ENCODE measurements at regions of chr20 and their contacts with region 1.

Region 1: DNA sequence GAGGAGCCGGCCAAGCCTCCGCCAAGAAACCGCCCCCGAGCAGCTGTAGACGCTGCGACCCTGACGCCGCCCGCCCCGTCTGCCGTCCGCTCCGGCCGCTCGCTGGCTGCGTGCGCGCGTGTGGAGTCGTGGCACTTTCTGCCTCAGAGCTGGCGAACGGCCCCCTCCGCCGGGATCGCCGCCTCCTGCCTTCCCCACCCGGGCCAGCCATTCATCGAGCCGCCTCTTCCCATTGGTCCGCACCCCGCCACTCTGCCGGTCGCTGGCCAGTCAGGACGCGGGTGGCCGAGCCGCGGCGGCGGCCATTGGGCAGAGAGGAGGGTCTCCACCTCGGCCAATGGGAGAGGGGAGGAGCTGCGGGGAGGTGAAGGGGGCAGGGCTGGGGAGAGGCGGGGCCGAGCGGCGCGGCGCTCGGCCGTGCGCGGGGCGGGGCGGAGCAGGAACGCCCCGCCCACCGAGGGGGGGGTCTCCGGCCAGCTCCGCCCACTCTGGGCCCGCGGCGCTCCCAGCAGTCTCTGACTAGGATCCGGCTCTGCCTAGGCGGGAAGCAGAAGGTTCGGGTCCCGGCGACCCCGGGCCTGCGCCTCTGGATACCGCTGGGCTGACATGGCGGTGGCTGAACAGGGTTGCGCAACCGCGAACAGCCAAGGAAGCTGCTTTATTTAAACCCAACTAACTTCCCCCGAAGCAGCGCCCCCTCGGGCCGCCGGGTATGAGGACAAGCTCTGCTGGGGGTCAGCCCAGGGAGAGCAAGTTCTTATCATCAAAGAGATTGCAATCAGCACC is at the start of gene RRBP1:
- DNase-seq: peak; percentile 98
- H3K4me3 Mint-ChIP-seq: peak within 1 kb of the TSS; percentile 84
- H3K27ac Mint-ChIP-seq: peak within 1 kb of the TSS; percentile 83
- H3K4me1 Mint-ChIP-seq: peaks cover 34% of the 10 kb centered on the region
- H3K27me3 Mint-ChIP-seq: peaks cover 41% of the 10 kb centered on the region
- total RNA-seq, gene RRBP1: 82.3 to 85.7 TPM

Region 2: GRCh38 chr20:17541996-17542395 is 140.3 kb before region 1 on chr20:
- CTCF ChIA-PET with region 1: interaction called, 15 read pairs
- POLR2A ChIA-PET with region 1: interaction called, 7 read pairs
- DNase-seq: no peak
- H3K4me3 Mint-ChIP-seq: no peak overlapping the region
- H3K27ac Mint-ChIP-seq: no peak overlapping the region
- H3K4me1 Mint-ChIP-seq: peaks cover 21% of the 10 kb centered on the region
- H3K27me3 Mint-ChIP-seq: peaks cover 53% of the 10 kb centered on the region

Region 3: DNA sequence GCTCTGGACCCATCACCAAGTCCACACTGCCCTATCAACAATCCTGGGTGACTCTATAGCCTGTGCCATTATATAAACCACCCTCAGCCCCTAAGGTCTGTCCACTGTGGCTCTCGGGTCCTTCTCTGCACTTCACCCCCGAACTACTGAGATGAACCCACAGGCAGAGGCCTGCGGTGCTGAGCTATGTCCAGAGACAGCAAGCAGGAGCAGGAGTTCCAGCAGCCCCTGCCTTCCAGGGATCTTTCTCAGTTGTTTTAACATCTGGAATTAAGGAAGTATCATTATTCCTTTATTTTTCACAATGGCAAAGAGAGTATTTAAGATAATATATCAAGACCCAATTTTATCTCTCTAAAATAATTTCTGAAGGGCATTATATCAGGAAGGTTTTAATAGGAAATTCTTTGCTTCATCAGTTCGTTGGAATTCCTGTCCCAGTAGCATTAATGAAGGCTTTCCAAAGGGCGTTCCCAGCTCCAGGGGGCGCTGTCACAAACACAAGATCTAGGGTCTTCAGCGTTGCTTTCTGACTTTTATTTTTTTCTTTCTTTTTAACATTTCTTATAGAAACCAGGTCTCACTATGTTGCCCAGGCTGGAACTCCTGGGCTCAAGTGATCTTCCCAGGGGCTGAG is 27.5 kb before region 1 on chr20:
- CTCF ChIA-PET with region 1: interaction called, 10 read pairs
- POLR2A ChIA-PET with region 1: no interaction called
- DNase-seq: no peak
- H3K4me3 Mint-ChIP-seq: no peak overlapping the region
- H3K27ac Mint-ChIP-seq: no peak overlapping the region
- H3K4me1 Mint-ChIP-seq: peaks cover 16% of the 10 kb centered on the region
- H3K27me3 Mint-ChIP-seq: no peaks in the 10 kb centered on the region

Region 4: DNA sequence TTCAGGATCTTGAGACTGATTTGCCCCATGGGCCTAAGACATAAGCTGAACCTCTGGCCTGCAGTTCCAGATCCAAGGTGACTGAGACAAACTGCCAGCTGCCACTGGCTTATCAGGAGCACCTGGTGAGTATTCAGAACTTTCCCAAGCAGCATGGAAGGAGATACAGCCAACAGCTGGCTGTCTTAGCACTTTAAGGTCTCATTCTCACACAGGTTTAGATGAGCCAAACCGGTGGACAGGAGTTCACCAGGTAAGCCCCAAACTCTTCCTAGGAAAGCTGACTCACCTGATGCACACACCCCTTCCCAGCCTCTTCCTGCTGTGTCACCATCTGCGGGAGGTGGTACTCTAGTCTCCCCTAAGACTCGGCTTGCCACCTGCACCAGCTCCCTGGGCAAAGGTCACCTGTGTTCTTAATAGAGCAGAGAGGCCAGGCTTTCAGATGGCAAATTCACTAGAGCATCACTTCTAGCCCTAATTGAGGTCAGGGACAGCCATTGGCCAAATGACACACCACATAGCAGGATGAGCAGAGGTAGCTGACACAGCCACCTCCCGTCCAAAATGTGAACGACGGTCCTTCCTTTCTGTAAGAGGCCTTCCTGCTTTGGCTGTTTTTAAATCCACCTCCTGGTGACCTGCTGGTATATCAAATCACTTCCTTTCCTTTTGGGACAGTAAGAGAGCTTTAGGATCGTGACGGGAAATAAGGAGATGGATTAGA is 17.8 kb after region 1 on chr20 and contains the start of gene BANF2:
- CTCF ChIA-PET with region 1: interaction called, 43 read pairs
- POLR2A ChIA-PET with region 1: interaction called, 3 read pairs
- DNase-seq: no peak
- H3K4me3 Mint-ChIP-seq: no peak within 1 kb of the TSS
- H3K27ac Mint-ChIP-seq: no peak within 1 kb of the TSS
- H3K4me1 Mint-ChIP-seq: no peaks in the 10 kb centered on the region
- H3K27me3 Mint-ChIP-seq: peaks cover 6% of the 10 kb centered on the region
- total RNA-seq, gene BANF2: not detected

Region 5: GRCh38 chr20:17938871-17939619 is 256.7 kb after region 1 on chr20:
- CTCF ChIA-PET with region 1: interaction called, 14 read pairs
- POLR2A ChIA-PET with region 1: interaction called, 3 read pairs
- DNase-seq: peak; percentile 68
- H3K4me3 Mint-ChIP-seq: no peak overlapping the region
- H3K27ac Mint-ChIP-seq: no peak overlapping the region
- H3K4me1 Mint-ChIP-seq: peaks cover 24% of the 10 kb centered on the region
- H3K27me3 Mint-ChIP-seq: no peaks in the 10 kb centered on the region

Region 6: DNA sequence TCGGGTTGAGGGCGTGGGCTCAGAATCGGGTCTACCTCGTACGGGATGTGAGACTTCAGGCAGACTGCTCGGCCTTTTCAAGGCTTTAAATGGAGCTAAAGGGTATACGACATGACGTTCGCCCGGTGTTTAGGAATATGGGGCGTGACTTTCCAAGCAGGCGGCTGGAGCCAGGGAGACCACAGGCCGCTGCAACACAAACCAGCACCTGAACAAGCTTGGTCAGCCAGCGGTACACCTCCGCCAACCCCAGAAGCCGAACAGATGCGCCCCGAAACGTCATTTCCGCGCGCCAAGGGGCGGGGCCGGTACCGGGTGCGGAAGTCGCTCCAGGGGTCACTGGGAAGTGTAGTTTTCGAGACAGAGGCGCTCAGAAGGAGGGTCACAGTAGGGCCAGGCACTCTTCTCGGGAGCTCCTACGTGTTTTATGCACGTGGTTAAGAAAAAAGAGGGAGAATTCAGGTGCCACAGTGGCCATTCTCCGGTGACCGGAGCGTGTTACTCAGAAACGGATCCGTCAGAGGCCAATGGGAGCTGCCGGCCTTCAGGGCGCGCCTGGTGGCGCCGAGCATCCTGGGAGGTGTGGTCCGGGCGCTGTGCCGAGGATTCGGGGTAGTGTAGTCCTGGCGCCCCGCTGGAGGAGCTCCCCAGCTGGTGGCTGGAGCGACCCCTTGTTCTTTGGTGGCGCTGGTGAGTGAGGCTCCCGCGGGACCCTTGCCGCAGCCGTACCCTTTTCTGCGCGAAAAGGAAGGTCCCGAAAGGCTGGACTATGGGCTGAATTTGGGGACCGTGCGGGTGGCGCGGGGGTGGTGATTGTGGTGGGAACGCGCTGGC is 605.8 kb after region 1 on chr20 and contains the start of gene ZNF133:
- CTCF ChIA-PET with region 1: interaction called, 7 read pairs
- POLR2A ChIA-PET with region 1: interaction called, 14 read pairs
- DNase-seq: peak; percentile 96
- H3K4me3 Mint-ChIP-seq: peak within 1 kb of the TSS; percentile 95
- H3K27ac Mint-ChIP-seq: peak within 1 kb of the TSS; percentile 93
- H3K4me1 Mint-ChIP-seq: peaks cover 29% of the 10 kb centered on the region
- H3K27me3 Mint-ChIP-seq: peaks cover 15% of the 10 kb centered on the region
- total RNA-seq, gene ZNF133: 8.4 to 10.2 TPM

Measured in activated CD4-positive, alpha-beta memory T cell treated with anti-CD3 and anti-CD28 coated beads, Interleukin-2, amount 10 ng/mL, durations not matched to agents 7 days and 5 days (primary cell).